CD4-positive, alpha-beta memory T cell (primary cell): ENCODE measurements at regions of chr20 and their contacts with region 1.

Region 1: GRCh38 chr20:62616728-62617621 is 25.3 kb upstream of the SLCO4A1 start:
- DNase-seq: peak; percentile 44 to 54 (median 50)
- H3K4me3 ChIP-seq: no peak overlapping the region
- H3K4me3 Mint-ChIP-seq: peak overlapping the region in 1 of 8 donors; percentile 61
- H3K27ac ChIP-seq: no peak overlapping the region
- H3K27ac Mint-ChIP-seq: peak overlapping the region; percentile 22 to 89 (median 62)
- H3K4me1 ChIP-seq: peaks cover 27% of the 10 kb centered on the region
- H3K4me1 Mint-ChIP-seq: peaks cover 3 to 32% (median 13%) of the 10 kb centered on the region in 4 donors
- H3K27me3 ChIP-seq: no peaks in the 10 kb centered on the region
- H3K27me3 Mint-ChIP-seq: peaks cover 0 to 2% of the 10 kb centered on the region in 2 donors

Region 2: GRCh38 chr20:62500237-62500864 is 116.6 kb before region 1 on chr20:
- CTCF ChIA-PET with region 1: interaction called, 5 read pairs
- POLR2A ChIA-PET with region 1: interaction called, 4 read pairs
- intact Hi-C with region 1: loop called (anchors 1 kb)
- DNase-seq: peak; percentile 64 to 78 (median 66)
- H3K4me3 ChIP-seq: no peak overlapping the region
- H3K4me3 Mint-ChIP-seq: peak overlapping the region in 1 of 8 donors; percentile 48
- H3K27ac ChIP-seq: no peak overlapping the region
- H3K27ac Mint-ChIP-seq: peak overlapping the region in 4 of 7 donors; percentile 59 to 89 (median 61)
- H3K4me1 ChIP-seq: peaks cover 14% of the 10 kb centered on the region
- H3K4me1 Mint-ChIP-seq: peaks cover 11 to 23% (median 17%) of the 10 kb centered on the region in 4 donors
- H3K27me3 ChIP-seq: no peaks in the 10 kb centered on the region
- H3K27me3 Mint-ChIP-seq: peaks cover 0 to 2% of the 10 kb centered on the region in 2 donors

Region 3: DNA sequence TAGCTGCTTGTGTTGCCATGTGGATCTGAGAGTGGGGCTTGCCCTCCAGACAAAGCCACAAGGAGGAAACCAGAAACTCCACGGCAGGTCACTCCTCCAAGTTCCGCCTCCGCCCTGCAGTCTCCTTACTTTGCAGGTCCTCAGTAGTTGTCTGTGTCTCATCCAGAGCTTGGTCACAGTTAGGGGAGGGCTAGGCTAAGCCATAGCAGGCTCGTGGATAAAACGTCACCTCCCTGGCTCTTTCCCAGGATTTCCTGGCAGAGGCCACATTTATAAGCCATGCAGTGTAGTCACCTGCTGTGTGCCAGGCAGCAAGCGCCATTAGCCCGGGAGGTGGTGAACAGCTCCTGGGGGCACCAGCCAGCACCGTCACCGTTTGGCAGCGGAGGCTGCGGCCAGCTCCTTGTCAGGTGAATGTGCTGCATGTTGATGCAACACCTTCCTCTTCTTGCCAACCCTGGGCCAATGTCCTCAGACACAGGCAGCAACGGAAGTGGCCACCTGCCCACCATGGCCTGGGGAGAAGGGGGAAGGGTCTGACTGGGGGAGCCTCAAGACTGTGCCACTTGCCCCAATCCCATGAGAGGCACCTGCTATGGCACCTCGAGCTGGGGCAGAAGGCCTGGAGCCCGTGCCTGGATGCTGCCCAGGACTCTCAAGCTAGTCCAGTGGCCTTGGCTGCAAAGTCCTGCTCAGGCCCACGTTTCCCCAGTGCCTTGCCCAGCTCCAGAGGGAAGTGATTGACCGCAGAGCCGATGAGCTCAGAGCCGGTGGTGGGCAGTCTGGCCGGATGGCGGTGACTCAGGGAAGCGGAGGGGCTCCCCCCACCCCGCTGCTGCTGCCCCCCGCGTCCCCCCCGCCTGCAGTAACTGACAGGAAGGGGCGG is 13.7 kb before region 1 on chr20:
- CTCF ChIA-PET with region 1: interaction called, 10 read pairs
- POLR2A ChIA-PET with region 1: interaction called, 3 read pairs
- intact Hi-C with region 1: no loop called
- DNase-seq: peak; percentile 17 to 72 (median 26)
- H3K4me3 ChIP-seq: peak overlapping the region; percentile 12 to 31
- H3K4me3 Mint-ChIP-seq: peak overlapping the region; percentile 41 to 91 (median 80)
- H3K27ac ChIP-seq: no peak overlapping the region
- H3K27ac Mint-ChIP-seq: peak overlapping the region in 6 of 7 donors; percentile 61 to 84 (median 78)
- H3K4me1 ChIP-seq: peaks cover 26% of the 10 kb centered on the region
- H3K4me1 Mint-ChIP-seq: peaks cover 14 to 29% (median 20%) of the 10 kb centered on the region in 4 donors
- H3K27me3 ChIP-seq: no peaks in the 10 kb centered on the region
- H3K27me3 Mint-ChIP-seq: peaks cover 8 to 10% of the 10 kb centered on the region in 2 donors